Activated CD8-positive, alpha-beta T cell treated with anti-CD3 and anti-CD28 coated beads for 36 hours (primary cell): ENCODE measurements at regions of chr2 and their contacts with region 1.

Region 1: DNA sequence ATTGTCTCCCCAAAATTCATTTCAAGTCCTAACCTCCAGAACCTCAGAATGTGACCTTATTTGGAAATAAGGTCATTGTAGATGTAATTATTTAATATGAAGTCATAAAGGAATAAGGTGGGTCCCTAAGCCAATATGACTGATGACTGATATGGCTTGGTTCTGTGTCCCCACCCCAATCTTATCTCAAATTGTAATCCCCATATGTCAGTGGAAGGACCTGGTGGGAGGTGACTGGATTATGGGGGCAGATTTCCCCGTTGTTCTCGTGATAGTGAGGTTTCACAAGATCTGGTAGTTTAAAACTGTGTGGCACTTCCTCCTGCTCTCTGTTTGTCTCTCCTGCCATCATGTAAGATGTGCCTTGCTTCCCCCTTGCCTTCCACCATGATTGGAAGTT is 43.0 kb upstream of the BCL11A start:
- DNase-seq: no peak
- ATAC-seq: no peak
- H3K4me3 Mint-ChIP-seq: no peak overlapping the region
- H3K27ac Mint-ChIP-seq: no peak overlapping the region
- H3K4me1 Mint-ChIP-seq: no peaks in the 10 kb centered on the region
- H3K27me3 Mint-ChIP-seq: peaks cover 4% of the 10 kb centered on the region
- CTCF ChIP-seq: no peak

Region 2: DNA sequence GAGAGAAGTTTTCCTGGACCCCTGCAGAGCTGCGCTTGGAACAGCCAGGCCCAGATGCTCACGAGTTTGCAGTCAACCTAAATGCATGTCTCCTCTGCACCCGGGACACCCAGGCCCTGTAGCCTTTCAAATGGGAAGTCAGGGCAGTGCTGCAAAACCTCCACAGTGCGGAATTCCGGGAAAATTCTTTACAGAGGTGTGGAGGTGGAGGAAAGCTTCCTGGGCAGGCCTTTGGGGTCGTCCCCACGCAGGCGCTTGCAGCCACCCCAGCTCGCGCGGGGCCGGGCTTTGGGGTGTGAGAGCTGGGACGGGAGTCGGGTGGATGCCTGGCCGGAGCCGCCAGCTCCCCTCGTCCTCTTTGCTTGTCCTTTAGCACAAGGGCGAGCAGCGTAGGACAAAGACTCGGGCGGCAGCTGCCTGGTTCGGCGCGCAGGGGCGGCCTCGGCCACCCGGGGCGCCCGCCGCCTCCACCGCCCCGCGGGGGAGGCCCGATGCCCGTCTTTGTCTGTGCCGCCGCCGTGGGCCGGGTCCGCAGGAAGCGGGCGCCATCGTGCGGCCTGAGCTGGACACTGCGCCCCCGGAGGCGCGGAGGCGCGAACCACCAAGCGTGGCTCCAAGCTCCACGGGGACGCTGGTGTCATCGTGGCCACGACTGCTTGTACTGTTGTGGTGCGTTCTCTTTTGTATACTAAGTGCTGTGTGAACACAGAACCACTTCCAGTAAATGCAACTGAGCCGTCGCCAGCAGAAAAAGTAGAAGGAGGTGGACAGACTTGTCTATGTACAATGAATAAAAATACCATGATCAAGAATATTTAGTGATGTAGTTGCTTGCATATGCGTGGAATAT is 14.8 kb before region 1 on chr2:
- CTCF ChIA-PET with region 1: interaction called, 34 read pairs
- POLR2A ChIA-PET with region 1: no interaction called
- intact Hi-C with region 1: no loop called
- DNase-seq: peak; percentile 75
- ATAC-seq: peak; percentile 99
- H3K4me3 Mint-ChIP-seq: no peak overlapping the region
- H3K27ac Mint-ChIP-seq: no peak overlapping the region
- H3K4me1 Mint-ChIP-seq: peaks cover 2% of the 10 kb centered on the region
- H3K27me3 Mint-ChIP-seq: peaks cover 29% of the 10 kb centered on the region
- CTCF ChIP-seq: peak; percentile 98

Region 3: DNA sequence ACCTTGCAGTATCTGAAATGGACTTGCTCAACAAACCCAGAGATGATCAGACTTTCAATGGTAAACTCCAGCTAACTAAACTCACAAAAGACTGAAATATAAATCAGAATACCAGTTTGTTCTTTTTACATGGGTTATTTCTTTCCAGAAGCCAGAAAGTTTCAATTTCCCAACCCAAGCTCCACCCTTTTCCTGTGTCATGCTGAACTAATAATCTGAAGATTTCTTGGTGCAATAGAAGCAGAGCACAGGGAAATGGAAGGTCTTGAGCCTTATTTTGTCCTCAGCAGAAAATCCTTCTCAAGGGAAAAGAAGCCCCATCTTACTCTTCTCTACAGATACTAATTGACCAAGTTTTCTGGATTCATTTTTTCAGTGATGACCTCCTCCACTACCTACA is 66.4 kb after region 1 on chr2:
- CTCF ChIA-PET with region 1: no interaction called
- POLR2A ChIA-PET with region 1: no interaction called
- intact Hi-C with region 1: no loop called
- DNase-seq: no peak
- ATAC-seq: no peak
- H3K4me3 Mint-ChIP-seq: no peak overlapping the region
- H3K27ac Mint-ChIP-seq: no peak overlapping the region
- H3K4me1 Mint-ChIP-seq: peaks cover 2% of the 10 kb centered on the region
- H3K27me3 Mint-ChIP-seq: peaks cover 3% of the 10 kb centered on the region
- CTCF ChIP-seq: no peak

Region 4: GRCh38 chr2:60717691-60718090 is 121.3 kb after region 1 on chr2:
- CTCF ChIA-PET with region 1: no interaction called
- POLR2A ChIA-PET with region 1: no interaction called
- intact Hi-C with region 1: no loop called
- DNase-seq: no peak
- ATAC-seq: no peak
- H3K4me3 Mint-ChIP-seq: no peak overlapping the region
- H3K27ac Mint-ChIP-seq: no peak overlapping the region
- H3K4me1 Mint-ChIP-seq: peaks cover 3% of the 10 kb centered on the region
- H3K27me3 Mint-ChIP-seq: no peaks in the 10 kb centered on the region
- CTCF ChIP-seq: no peak